Natural killer cell (primary cell): ENCODE measurements at regions of chr17 and their contacts with region 1.

Region 1: DNA sequence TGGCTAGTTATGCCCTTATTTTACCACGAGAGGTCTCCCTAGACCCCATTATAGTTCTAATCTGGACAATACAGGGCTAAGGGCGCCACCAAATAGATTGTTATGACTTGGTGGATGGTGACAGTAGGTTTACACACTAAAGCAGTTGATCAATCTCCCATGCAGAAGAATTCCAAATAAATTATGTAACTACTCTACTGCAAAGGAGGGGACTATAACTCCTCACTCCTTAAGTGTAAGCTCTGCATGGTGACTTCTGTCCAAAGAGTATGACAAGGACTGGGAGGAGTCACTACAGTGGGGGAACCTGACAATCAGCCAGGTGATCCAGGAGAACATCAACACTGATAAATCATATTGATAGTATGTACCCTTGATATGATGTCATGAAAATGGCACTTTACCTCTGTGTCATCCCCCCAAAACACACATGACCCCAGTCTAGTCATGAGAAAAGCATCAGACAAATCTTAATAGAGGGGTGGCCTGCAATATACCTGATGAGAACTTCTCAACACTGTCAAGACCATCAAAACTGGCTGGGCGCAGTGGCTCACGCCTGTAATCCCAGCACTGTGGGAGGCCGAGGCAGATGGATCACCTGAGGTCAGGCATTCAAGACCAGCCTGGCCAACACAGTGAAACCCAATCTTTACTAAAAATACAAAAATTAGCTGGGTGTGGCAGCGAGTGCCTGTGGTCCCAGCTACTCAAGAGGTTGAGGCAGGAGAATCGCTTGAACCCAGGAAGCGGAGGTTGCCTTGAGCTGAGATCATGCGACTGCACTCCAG is 20.1 kb upstream of the YPEL2 start:
- DNase-seq: peak in 1 of 2 donors; percentile 81
- ATAC-seq: peak; percentile 91 to 99 (median 99)
- H3K4me3 ChIP-seq: no peak overlapping the region
- H3K4me3 Mint-ChIP-seq: no peak overlapping the region
- H3K27ac ChIP-seq: no peak overlapping the region
- H3K27ac Mint-ChIP-seq: no peak overlapping the region
- H3K4me1 ChIP-seq: no peaks in the 10 kb centered on the region
- H3K4me1 Mint-ChIP-seq: peaks cover 5% of the 10 kb centered on the region in 2 donors
- H3K27me3 ChIP-seq: no peaks in the 10 kb centered on the region
- H3K27me3 Mint-ChIP-seq: no peaks in the 10 kb centered on the region
- CTCF ChIP-seq: peak; percentile 84

Region 2: GRCh38 chr17:58960068-58960467 is 351.3 kb before region 1 on chr17:
- intact Hi-C with region 1: no loop called
- DNase-seq: peak in 1 of 2 donors; percentile 22
- ATAC-seq: no peak
- H3K4me3 ChIP-seq: no peak overlapping the region
- H3K4me3 Mint-ChIP-seq: no peak overlapping the region
- H3K27ac ChIP-seq: no peak overlapping the region
- H3K27ac Mint-ChIP-seq: no peak overlapping the region
- H3K4me1 ChIP-seq: no peaks in the 10 kb centered on the region
- H3K4me1 Mint-ChIP-seq: no peaks in the 10 kb centered on the region
- H3K27me3 ChIP-seq: no peaks in the 10 kb centered on the region
- H3K27me3 Mint-ChIP-seq: peaks cover 8 to 11% of the 10 kb centered on the region in 2 donors
- CTCF ChIP-seq: no peak

Region 3: GRCh38 chr17:59199398-59199797 is 111.9 kb before region 1 on chr17:
- intact Hi-C with region 1: no loop called
- DNase-seq: no peak
- ATAC-seq: no peak
- H3K4me3 ChIP-seq: no peak overlapping the region
- H3K4me3 Mint-ChIP-seq: no peak overlapping the region
- H3K27ac ChIP-seq: no peak overlapping the region
- H3K27ac Mint-ChIP-seq: no peak overlapping the region
- H3K4me1 ChIP-seq: no peaks in the 10 kb centered on the region
- H3K4me1 Mint-ChIP-seq: no peaks in the 10 kb centered on the region
- H3K27me3 ChIP-seq: no peaks in the 10 kb centered on the region
- H3K27me3 Mint-ChIP-seq: no peaks in the 10 kb centered on the region
- CTCF ChIP-seq: no peak

Region 4: DNA sequence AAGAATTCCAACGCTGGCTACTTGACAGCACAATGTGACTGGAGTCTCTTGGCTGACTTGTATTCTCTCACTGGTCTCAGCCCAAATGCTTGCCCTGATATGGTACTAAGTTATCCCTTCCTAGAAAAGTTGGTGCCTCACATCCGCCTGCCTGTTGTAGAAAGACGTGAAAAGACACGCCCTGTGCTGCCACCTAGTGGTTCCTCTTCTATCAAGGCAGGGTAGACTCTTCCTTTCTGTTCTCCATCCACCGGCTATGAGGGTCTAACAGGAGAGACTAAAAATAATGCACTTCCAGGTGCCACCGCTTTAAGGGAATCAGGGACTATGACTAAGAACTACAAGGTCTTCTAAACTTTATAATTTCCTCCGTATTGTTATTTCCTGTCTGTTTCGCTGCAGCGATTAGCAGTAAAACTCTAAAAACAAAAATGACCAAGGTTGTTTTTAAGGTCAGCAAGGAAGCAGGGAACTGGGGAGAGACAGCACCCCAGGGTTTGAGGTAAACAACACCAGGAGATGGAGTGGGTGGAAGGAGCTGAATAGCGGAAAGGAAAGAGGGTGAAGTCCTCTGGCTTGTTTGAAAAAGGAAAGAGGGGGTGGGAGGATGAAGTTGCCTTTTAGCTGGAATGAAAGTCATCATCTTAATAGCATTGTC is 129.6 kb after region 1 on chr17:
- intact Hi-C with region 1: loop called (anchors 1 kb)
- DNase-seq: peak; percentile 75 to 94
- ATAC-seq: peak; percentile 91 to 99 (median 98)
- H3K4me3 ChIP-seq: no peak overlapping the region
- H3K4me3 Mint-ChIP-seq: peak overlapping the region; percentile 29
- H3K27ac ChIP-seq: no peak overlapping the region
- H3K27ac Mint-ChIP-seq: peak overlapping the region in 1 of 2 donors; percentile 49
- H3K4me1 ChIP-seq: peaks cover 3% of the 10 kb centered on the region
- H3K4me1 Mint-ChIP-seq: peaks cover 7 to 8% of the 10 kb centered on the region in 2 donors
- H3K27me3 ChIP-seq: no peaks in the 10 kb centered on the region
- H3K27me3 Mint-ChIP-seq: peaks cover 9 to 15% of the 10 kb centered on the region in 2 donors
- CTCF ChIP-seq: peak; percentile 84

Region 5: DNA sequence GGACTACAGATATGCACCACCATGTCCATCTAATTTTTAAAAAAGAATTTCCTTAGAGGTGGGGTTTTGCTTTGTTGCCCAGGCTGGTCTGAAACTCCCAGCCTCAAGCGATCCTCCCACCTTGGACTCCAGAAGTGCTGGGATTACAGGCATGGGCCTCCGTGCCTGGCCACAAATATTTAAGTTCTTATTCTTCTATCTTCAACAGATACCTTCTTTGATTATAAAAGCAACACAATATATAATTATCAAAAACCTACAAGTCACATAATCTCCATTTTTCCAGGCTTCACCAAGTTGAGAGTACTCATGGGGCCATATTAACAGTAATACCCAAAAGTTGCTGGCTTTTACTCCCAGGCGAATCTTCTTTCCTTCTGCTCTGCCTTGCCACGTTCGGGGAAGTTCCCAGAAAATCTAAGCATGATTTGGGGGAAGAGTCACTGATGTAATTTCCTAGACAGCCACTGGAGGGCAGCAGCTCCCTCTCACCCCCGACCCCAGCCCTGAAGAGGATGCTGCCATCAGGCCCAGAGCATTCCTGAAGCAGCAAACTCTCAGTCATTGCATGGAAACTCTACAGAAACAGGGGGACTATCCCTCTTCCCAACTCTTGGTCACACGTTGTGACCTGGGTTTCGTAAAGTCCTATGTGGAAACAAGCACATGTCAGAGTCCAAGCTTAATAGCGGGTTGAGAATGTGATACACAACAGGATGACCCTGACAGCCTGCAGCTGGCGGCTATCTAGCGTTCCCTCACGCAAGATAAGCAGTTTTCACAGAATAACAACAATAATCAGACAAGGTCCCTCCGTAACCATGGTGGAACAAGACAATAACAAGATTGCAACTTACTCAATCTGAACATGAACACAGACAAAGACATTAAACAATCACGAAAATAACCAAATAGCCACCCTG is 210.1 kb after region 1 on chr17:
- intact Hi-C with region 1: loop called (anchors 5 kb)
- DNase-seq: peak; percentile 37 to 79
- ATAC-seq: peak; percentile 72 to 85 (median 79)
- H3K4me3 ChIP-seq: no peak overlapping the region
- H3K4me3 Mint-ChIP-seq: no peak overlapping the region
- H3K27ac ChIP-seq: no peak overlapping the region
- H3K27ac Mint-ChIP-seq: no peak overlapping the region
- H3K4me1 ChIP-seq: no peaks in the 10 kb centered on the region
- H3K4me1 Mint-ChIP-seq: peaks cover 3 to 7% of the 10 kb centered on the region in 2 donors
- H3K27me3 ChIP-seq: peaks cover 2% of the 10 kb centered on the region
- H3K27me3 Mint-ChIP-seq: peaks cover 8 to 27% of the 10 kb centered on the region in 2 donors
- CTCF ChIP-seq: peak; percentile 90